ENCODE measurements at regions of chr7 and their contacts with region 1.

Region 1: GRCh38 chr7:86748843-86749719 is 105.4 kb downstream of the GRM3 start:
- DNase-seq: no peak
- ATAC-seq: no peak
- H3K4me3 ChIP-seq: no peak overlapping the region
- H3K27ac ChIP-seq: no peak overlapping the region
- H3K4me1 ChIP-seq: peaks cover 3% of the 10 kb centered on the region; the same call in 1 of the 2 replicates
- H3K27me3 ChIP-seq: peaks cover 0 to 8% of the 10 kb centered on the region in 2 experiments; a peak in 3 of 4 replicates
- CTCF ChIP-seq: no peak
- EP300 ChIP-seq: no peak
- POLR2A ChIP-seq: no peak
- RAD21 ChIP-seq: no peak

Region 2: GRCh38 chr7:86775203-86775602 is 26.1 kb after region 1 on chr7:
- CTCF ChIA-PET with region 1: interaction called, 3 read pairs
- POLR2A ChIA-PET with region 1: no interaction called
- RAD21 ChIA-PET with region 1: no interaction called
- SMC1A ChIA-PET with region 1: no interaction called
- in situ Hi-C with region 1: no loop called
- intact Hi-C with region 1: loop called (anchors 2 kb)
- DNase-seq: no peak
- ATAC-seq: no peak
- H3K4me3 ChIP-seq: no peak overlapping the region
- H3K27ac ChIP-seq: no peak overlapping the region
- H3K4me1 ChIP-seq: no peaks in the 10 kb centered on the region; the same call in 1 of the 2 replicates
- H3K27me3 ChIP-seq: no peaks in the 10 kb centered on the region; a peak in 1 of 4 replicates
- CTCF ChIP-seq: no peak
- EP300 ChIP-seq: no peak
- POLR2A ChIP-seq: no peak
- RAD21 ChIP-seq: no peak

Region 3: GRCh38 chr7:86790383-86790782 is 41.3 kb after region 1 on chr7:
- CTCF ChIA-PET with region 1: no interaction called
- POLR2A ChIA-PET with region 1: no interaction called
- RAD21 ChIA-PET with region 1: no interaction called
- SMC1A ChIA-PET with region 1: no interaction called
- in situ Hi-C with region 1: no loop called
- intact Hi-C with region 1: loop called (anchors 5 kb)
- DNase-seq: no peak
- ATAC-seq: peak; percentile 71
- H3K4me3 ChIP-seq: no peak overlapping the region
- H3K27ac ChIP-seq: no peak overlapping the region
- H3K4me1 ChIP-seq: peaks cover 31% of the 10 kb centered on the region
- H3K27me3 ChIP-seq: no peaks in the 10 kb centered on the region
- CTCF ChIP-seq: no peak
- EP300 ChIP-seq: no peak
- POLR2A ChIP-seq: no peak
- RAD21 ChIP-seq: no peak

Region 4: GRCh38 chr7:87416682-87417587 is 667.9 kb after region 1 on chr7:
- CTCF ChIA-PET with region 1: no interaction called
- POLR2A ChIA-PET with region 1: no interaction called
- RAD21 ChIA-PET with region 1: no interaction called
- SMC1A ChIA-PET with region 1: no interaction called
- in situ Hi-C with region 1: no loop called
- intact Hi-C with region 1: no loop called
- DNase-seq: peak; percentile 44
- ATAC-seq: peak; percentile 96
- H3K4me3 ChIP-seq: no peak overlapping the region
- H3K27ac ChIP-seq: no peak overlapping the region
- H3K4me1 ChIP-seq: no peaks in the 10 kb centered on the region
- H3K27me3 ChIP-seq: no peaks in the 10 kb centered on the region
- CTCF ChIP-seq: peak; percentile 55 to 82 (median 61)
- EP300 ChIP-seq: no peak
- POLR2A ChIP-seq: no peak
- RAD21 ChIP-seq: peak; percentile 90